ENCODE measurements at regions of chr9 and their contacts with region 1.

Region 1: DNA sequence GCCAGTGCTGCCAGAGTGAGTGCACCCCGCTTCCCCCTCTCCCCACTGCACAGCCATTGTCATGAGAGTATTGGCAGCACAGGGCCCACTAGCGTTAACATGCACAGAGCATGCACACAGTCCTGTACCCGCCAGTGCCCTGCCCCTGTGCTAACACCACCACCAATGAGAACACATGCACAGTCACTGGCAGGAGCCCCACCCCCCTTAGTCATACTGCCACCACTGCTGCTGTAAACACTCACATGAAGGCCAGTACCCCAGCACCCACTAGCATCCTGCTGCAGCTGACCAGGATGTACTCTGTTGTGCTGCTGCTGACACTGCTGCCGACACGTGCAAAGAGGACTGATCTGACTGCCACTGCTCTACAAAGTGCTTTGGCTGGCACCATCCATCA is 19.5 kb upstream of the RANBP6 start:
- DNase-seq: no peak
- H3K4me3 Mint-ChIP-seq: no peak overlapping the region
- H3K27ac Mint-ChIP-seq: no peak overlapping the region
- H3K4me1 Mint-ChIP-seq: no peaks in the 10 kb centered on the region
- H3K27me3 Mint-ChIP-seq: no peaks in the 10 kb centered on the region
- CTCF ChIP-seq: no peak

Region 2: GRCh38 chr9:5667391-5667790 is 367.6 kb before region 1 on chr9:
- CTCF ChIA-PET with region 1: interaction called, 10 read pairs
- intact Hi-C with region 1: no loop called
- DNase-seq: no peak
- H3K4me3 Mint-ChIP-seq: no peak overlapping the region
- H3K27ac Mint-ChIP-seq: no peak overlapping the region
- H3K4me1 Mint-ChIP-seq: peaks cover 19% of the 10 kb centered on the region
- H3K27me3 Mint-ChIP-seq: no peaks in the 10 kb centered on the region
- CTCF ChIP-seq: no peak

Region 3: DNA sequence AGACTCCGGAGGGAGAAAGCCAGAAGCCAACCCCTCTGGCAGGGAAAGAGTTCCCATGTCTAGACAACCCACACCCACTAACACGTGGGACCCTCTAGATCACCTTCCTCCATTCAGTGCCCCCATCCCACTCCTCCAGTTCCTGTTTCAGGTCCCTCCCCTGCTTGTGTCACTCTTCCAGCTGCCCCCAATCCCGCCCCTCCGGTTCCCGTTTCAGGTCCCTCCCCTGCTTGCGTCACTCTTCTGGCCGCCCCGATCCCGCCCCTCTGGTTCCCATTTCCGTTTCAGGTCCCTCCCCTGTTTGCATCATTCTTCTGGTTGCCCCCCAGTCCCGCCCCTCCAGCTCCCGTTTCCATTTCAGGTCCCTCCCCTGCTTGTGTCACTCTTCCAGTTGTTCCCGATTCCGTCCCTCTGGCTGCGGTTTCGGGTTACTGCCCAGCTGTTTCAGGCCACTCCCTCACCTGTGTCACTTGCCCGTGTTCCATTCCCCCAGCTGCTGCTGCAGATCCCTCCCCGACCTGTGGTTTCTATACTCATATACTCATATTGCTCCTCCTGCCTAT is 45.3 kb after region 1 on chr9:
- CTCF ChIA-PET with region 1: no interaction called
- intact Hi-C with region 1: no loop called
- DNase-seq: peak; percentile 89
- H3K4me3 Mint-ChIP-seq: peak overlapping the region; percentile 73
- H3K27ac Mint-ChIP-seq: peak overlapping the region; percentile 86
- H3K4me1 Mint-ChIP-seq: peaks cover 27% of the 10 kb centered on the region
- H3K27me3 Mint-ChIP-seq: no peaks in the 10 kb centered on the region
- CTCF ChIP-seq: no peak

Region 4: GRCh38 chr9:6090317-6090716 is 55.4 kb after region 1 on chr9:
- CTCF ChIA-PET with region 1: no interaction called
- intact Hi-C with region 1: no loop called
- DNase-seq: no peak
- H3K4me3 Mint-ChIP-seq: no peak overlapping the region
- H3K27ac Mint-ChIP-seq: no peak overlapping the region
- H3K4me1 Mint-ChIP-seq: peaks cover 25% of the 10 kb centered on the region
- H3K27me3 Mint-ChIP-seq: no peaks in the 10 kb centered on the region
- CTCF ChIP-seq: no peak

Region 5: GRCh38 chr9:6126374-6126773 is 91.4 kb after region 1 on chr9:
- CTCF ChIA-PET with region 1: no interaction called
- intact Hi-C with region 1: no loop called
- DNase-seq: no peak
- H3K4me3 Mint-ChIP-seq: no peak overlapping the region
- H3K27ac Mint-ChIP-seq: no peak overlapping the region
- H3K4me1 Mint-ChIP-seq: peaks cover 7% of the 10 kb centered on the region
- H3K27me3 Mint-ChIP-seq: no peaks in the 10 kb centered on the region
- CTCF ChIP-seq: no peak

Region 6: DNA sequence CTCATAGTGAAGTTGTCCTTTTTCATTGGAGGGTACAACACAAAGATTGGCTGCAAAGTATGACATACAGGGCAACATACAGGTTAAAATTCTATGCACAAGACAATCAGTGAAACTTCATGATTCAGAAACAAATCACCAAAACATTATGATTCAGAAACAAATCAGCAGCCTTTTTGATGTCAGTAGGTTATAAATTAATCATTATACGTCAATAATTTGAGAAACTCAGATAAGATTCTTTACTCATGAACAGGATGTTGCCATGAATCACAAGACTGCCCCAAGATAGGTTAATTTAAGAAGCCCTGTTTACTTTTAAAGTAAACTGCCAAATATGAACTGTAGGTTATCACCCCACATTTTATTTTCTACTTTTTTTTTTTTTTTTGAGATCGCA is 118.5 kb after region 1 on chr9:
- CTCF ChIA-PET with region 1: no interaction called
- intact Hi-C with region 1: no loop called
- DNase-seq: no peak
- H3K4me3 Mint-ChIP-seq: peak overlapping the region; percentile 46
- H3K27ac Mint-ChIP-seq: peak overlapping the region; percentile 88
- H3K4me1 Mint-ChIP-seq: peaks cover 40% of the 10 kb centered on the region
- H3K27me3 Mint-ChIP-seq: no peaks in the 10 kb centered on the region
- CTCF ChIP-seq: no peak

Measured in Calu3 (cell line).